ENCODE measurements at regions of chr14 and their contacts with region 1.

Region 1: GRCh38 chr14:95425369-95426115 is 90.9 kb downstream of the SYNE3 start:
- DNase-seq: no peak
- ATAC-seq: no peak
- H3K4me3 ChIP-seq: no peak overlapping the region
- H3K4me3 Mint-ChIP-seq: no peak overlapping the region
- H3K27ac ChIP-seq: no peak overlapping the region
- H3K27ac Mint-ChIP-seq: no peak overlapping the region
- H3K4me1 ChIP-seq: peaks cover 2% of the 10 kb centered on the region
- H3K4me1 Mint-ChIP-seq: no peaks in the 10 kb centered on the region
- H3K27me3 ChIP-seq: no peaks in the 10 kb centered on the region
- H3K27me3 Mint-ChIP-seq: no peaks in the 10 kb centered on the region
- CTCF ChIP-seq: no peak

Region 2: GRCh38 chr14:95683793-95684192 is 258.3 kb after region 1 on chr14:
- CTCF ChIA-PET with region 1: interaction called, 3 read pairs
- POLR2A ChIA-PET with region 1: no interaction called
- intact Hi-C with region 1: loop called in 1 of 2 experiments (anchors 5 kb)
- DNase-seq: peak in 9 of 14 experiments; percentile 1 to 55 (median 16)
- ATAC-seq: no peak
- H3K4me3 ChIP-seq: no peak overlapping the region
- H3K4me3 Mint-ChIP-seq: no peak overlapping the region
- H3K27ac ChIP-seq: no peak overlapping the region
- H3K27ac Mint-ChIP-seq: no peak overlapping the region
- H3K4me1 ChIP-seq: no peaks in the 10 kb centered on the region
- H3K4me1 Mint-ChIP-seq: no peaks in the 10 kb centered on the region
- H3K27me3 ChIP-seq: peaks cover 0 to 3% of the 10 kb centered on the region in 2 experiments
- H3K27me3 Mint-ChIP-seq: peaks cover 31% of the 10 kb centered on the region
- CTCF ChIP-seq: peak; percentile 61

Region 3: DNA sequence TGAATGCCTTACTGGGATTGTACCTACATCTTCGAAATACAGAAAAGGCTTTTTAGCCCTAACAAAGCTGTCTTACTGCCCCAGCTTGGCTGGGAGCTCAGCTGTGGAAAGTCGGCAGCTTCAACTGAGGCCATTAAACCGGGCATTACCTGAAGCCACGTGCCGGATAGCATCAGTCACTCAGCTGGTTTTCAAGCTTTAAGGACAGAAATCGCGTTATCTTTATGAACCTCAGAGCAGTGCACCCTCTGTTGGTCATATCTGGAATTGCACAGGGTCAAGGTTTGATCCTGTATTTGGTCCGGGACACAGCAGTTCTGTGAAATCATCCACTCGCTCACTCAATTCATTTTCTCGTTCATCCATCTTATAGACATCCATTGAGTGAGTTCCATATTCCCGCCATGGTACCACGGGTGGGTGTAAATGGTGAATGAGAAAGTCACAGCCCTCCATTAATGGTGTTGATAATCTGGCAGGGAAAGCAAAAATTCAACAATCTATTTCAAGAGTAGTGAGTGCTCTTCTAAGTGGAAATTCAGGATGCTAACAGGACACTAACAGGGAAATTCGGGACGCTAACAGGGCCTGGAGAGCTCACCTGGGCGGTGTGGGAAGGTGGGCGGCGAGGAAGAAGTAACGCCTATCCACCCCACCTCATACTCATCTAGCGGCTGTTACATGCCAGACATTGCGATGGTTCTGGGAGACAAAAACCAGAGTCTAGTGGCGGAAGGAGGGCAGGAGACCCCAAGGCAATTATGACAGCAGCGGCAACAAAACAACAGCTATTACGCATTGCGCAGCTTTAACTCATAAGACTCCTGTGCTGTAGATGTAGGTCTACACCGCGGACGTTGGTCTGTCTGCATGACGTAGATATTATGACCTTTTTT is 349.0 kb after region 1 on chr14:
- CTCF ChIA-PET with region 1: no interaction called
- POLR2A ChIA-PET with region 1: no interaction called
- intact Hi-C with region 1: loop called in 1 of 2 experiments (anchors 5 kb)
- DNase-seq: peak in 13 of 14 experiments; percentile 27 to 69 (median 37)
- ATAC-seq: no peak
- H3K4me3 ChIP-seq: no peak overlapping the region
- H3K4me3 Mint-ChIP-seq: no peak overlapping the region
- H3K27ac ChIP-seq: no peak overlapping the region
- H3K27ac Mint-ChIP-seq: no peak overlapping the region
- H3K4me1 ChIP-seq: no peaks in the 10 kb centered on the region
- H3K4me1 Mint-ChIP-seq: peaks cover 5% of the 10 kb centered on the region
- H3K27me3 ChIP-seq: peaks cover 0 to 10% of the 10 kb centered on the region in 2 experiments
- H3K27me3 Mint-ChIP-seq: peaks cover 19% of the 10 kb centered on the region
- CTCF ChIP-seq: peak; percentile 93